ENCODE measurements at regions of chr6 and their contacts with region 1.

Region 1: GRCh38 chr6:143536865-143537691 is 25.6 kb upstream of the FUCA2 start:
- DNase-seq: no peak
- ATAC-seq: peak; percentile 71
- H3K4me3 ChIP-seq: peak overlapping the region; percentile 80
- H3K27ac ChIP-seq: peak overlapping the region; percentile 24; the same call in 1 of the 2 replicates
- H3K4me1 ChIP-seq: peaks cover 31% of the 10 kb centered on the region
- H3K27me3 ChIP-seq: peaks cover 0 to 1% of the 10 kb centered on the region in 2 experiments; a peak in 2 of 4 replicates
- CTCF ChIP-seq: peak; percentile 27 to 41 (median 37); a peak in 4 of 6 replicates
- EP300 ChIP-seq: no peak
- POLR2A ChIP-seq: peak; percentile 45; the same call in 1 of the 2 replicates
- RAD21 ChIP-seq: peak; percentile 20; the same call in 1 of the 2 replicates

Region 2: DNA sequence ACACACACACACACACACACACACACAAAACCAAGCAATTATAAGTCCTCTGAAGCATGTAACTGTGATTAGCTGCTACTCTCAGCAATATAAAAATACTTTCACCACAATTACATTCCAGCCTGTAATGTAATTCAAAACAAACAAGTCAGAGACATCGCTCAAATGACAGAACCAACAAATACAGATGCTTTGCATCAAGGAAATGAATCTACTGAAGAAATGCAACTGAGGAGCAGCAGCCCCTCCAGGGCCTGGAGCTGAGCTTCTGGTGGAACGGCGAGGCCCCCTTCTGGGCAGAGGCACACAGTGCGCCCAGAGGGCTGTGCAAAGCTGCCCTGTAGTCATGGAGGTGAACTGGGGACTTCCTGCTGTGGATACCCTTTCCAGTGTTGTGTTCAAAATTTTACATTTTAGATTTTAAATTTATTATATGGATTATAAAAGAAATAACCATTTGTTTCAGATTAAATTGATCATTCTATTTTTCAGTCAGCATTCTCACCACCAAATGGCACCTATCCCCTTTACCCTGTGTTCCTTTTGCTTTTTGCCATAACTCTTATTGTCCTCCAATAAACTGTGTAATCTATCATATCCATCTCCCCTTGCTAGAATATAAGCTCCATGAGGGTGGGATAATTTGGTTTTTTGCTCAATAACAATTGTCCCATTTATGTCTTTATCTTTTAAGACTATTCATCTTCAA is 109.8 kb before region 1 on chr6:
- CTCF ChIA-PET with region 1: no interaction called
- POLR2A ChIA-PET with region 1: no interaction called
- RAD21 ChIA-PET with region 1: no interaction called
- SMC1A ChIA-PET with region 1: no interaction called
- in situ Hi-C with region 1: no loop called
- intact Hi-C with region 1: no loop called
- DNase-seq: no peak
- ATAC-seq: peak; percentile 100
- H3K4me3 ChIP-seq: no peak overlapping the region
- H3K27ac ChIP-seq: no peak overlapping the region
- H3K4me1 ChIP-seq: no peaks in the 10 kb centered on the region
- H3K27me3 ChIP-seq: no peaks in the 10 kb centered on the region
- CTCF ChIP-seq: peak; percentile 94 to 98 (median 96); a peak in 5 of 6 replicates
- EP300 ChIP-seq: no peak
- POLR2A ChIP-seq: no peak
- RAD21 ChIP-seq: peak; percentile 100

Region 3: GRCh38 chr6:143569040-143569439 is 32.0 kb after region 1 on chr6:
- CTCF ChIA-PET with region 1: interaction called, 5 read pairs
- POLR2A ChIA-PET with region 1: no interaction called
- RAD21 ChIA-PET with region 1: no interaction called
- SMC1A ChIA-PET with region 1: interaction called, 3 read pairs
- in situ Hi-C with region 1: no loop called
- intact Hi-C with region 1: loop called (anchors 2 kb)
- DNase-seq: no peak
- ATAC-seq: no peak
- H3K4me3 ChIP-seq: no peak overlapping the region
- H3K27ac ChIP-seq: no peak overlapping the region
- H3K4me1 ChIP-seq: peaks cover 4% of the 10 kb centered on the region
- H3K27me3 ChIP-seq: no peaks in the 10 kb centered on the region; a peak in 2 of 4 replicates
- CTCF ChIP-seq: no peak
- EP300 ChIP-seq: no peak
- POLR2A ChIP-seq: no peak
- RAD21 ChIP-seq: no peak